Heart right ventricle (tissue), 16 donors: ENCODE measurements at regions of chr9 and their contacts with region 1.

Region 1: DNA sequence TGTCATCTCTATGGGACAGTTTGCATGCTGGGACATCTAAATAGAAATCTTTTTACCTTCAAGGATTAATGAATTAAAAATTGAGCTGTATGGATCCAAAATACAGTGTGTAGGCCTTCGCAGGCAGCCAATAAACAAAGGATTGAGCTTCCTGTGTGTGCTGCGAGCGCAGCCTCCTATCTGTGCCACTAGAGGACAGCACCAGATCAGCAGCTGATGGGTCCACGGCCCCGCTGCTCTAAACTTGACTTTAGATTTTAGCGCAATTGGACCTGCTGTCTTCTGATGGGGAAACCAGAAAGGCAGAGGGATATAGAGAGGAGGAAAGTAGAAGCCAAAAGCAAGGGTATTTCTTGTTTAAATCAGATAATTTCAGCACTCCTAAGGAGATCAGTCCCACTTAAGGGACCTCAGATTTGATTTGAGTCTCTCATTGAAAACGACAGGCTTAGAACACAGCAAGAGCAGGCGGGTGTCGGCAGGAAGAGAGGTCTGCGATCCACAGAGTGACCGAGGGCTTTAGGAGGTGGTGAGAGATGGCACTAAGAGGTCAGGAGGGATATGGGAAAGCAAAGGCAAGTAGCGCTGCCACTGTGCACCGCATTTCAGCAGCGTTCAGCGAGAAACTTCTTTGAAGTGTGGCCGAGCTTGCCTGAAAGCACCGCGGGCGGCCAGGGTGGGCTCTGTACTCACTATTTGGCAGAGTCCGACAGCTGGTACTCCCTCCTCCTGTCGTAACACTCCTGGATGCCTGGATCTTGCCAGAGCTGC is 214.3 kb downstream of the GNA14 start:
- DNase-seq: peak; percentile 46 to 53
- ATAC-seq: peak; percentile 65 to 89 (median 83)
- H3K4me3 ChIP-seq: no peak overlapping the region
- H3K27ac ChIP-seq: no peak overlapping the region
- H3K4me1 ChIP-seq: peaks cover 0 to 7% (median 0%) of the 10 kb centered on the region in 9 donors
- H3K27me3 ChIP-seq: peaks cover 0 to 4% (median 0%) of the 10 kb centered on the region in 7 donors
- CTCF ChIP-seq: peak; percentile 88 to 96 (median 93)

Region 2: GRCh38 chr9:77495834-77496671 is 62.2 kb after region 1 on chr9:
- intact Hi-C with region 1: no loop called
- DNase-seq: no peak
- ATAC-seq: peak in 7 of 8 donors; percentile 64 to 86 (median 78)
- H3K4me3 ChIP-seq: no peak overlapping the region
- H3K27ac ChIP-seq: peak overlapping the region in 6 of 10 donors; percentile 6 to 65 (median 34)
- H3K4me1 ChIP-seq: peaks cover 0 to 36% (median 6%) of the 10 kb centered on the region in 9 donors
- H3K27me3 ChIP-seq: no peaks in the 10 kb centered on the region
- CTCF ChIP-seq: no peak

Region 3: DNA sequence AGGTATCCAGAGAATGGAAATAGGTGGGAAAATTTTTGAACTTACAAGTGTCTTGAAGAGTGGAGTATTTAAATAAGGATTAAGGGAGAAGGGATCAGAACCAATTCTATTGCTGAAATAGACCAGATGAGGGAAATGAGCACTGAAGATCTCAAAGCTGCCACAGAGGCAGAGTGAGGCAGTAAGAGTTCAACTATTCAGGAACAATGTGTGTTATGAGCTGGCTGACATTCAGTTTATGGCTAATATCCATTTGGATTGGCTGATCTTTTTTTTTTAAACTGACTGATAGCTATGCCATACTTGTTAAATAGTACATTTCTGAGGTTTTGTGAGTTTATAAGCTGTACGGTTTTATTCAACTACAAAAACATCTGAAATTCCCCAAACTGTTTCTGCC is 309.5 kb after region 1 on chr9:
- intact Hi-C with region 1: loop called in 4 of 10 experiments (anchors 10 kb)
- DNase-seq: no peak
- ATAC-seq: no peak
- H3K4me3 ChIP-seq: no peak overlapping the region
- H3K27ac ChIP-seq: no peak overlapping the region
- H3K4me1 ChIP-seq: peaks cover 0 to 15% (median 3%) of the 10 kb centered on the region in 9 donors
- H3K27me3 ChIP-seq: no peaks in the 10 kb centered on the region
- CTCF ChIP-seq: no peak

Region 4: GRCh38 chr9:77751341-77752091 is 317.7 kb after region 1 on chr9:
- intact Hi-C with region 1: loop called in 5 of 10 experiments (anchors 5 to 10 kb)
- DNase-seq: peak in 1 of 2 donors; percentile 61
- ATAC-seq: peak in 7 of 8 donors; percentile 63 to 93 (median 77)
- H3K4me3 ChIP-seq: no peak overlapping the region
- H3K27ac ChIP-seq: peak overlapping the region in 4 of 10 donors; percentile 5 to 37 (median 12)
- H3K4me1 ChIP-seq: peaks cover 0 to 22% (median 10%) of the 10 kb centered on the region in 9 donors
- H3K27me3 ChIP-seq: no peaks in the 10 kb centered on the region
- CTCF ChIP-seq: peak; percentile 24 to 72 (median 53)

Region 5: GRCh38 chr9:78121488-78121887 is 687.6 kb after region 1 on chr9:
- intact Hi-C with region 1: loop called in 1 of 10 experiments (anchors 5 kb)
- DNase-seq: peak; percentile 44 to 57
- ATAC-seq: no peak
- H3K4me3 ChIP-seq: no peak overlapping the region
- H3K27ac ChIP-seq: no peak overlapping the region
- H3K4me1 ChIP-seq: peaks cover 0 to 26% (median 0%) of the 10 kb centered on the region in 9 donors
- H3K27me3 ChIP-seq: peaks cover 0 to 11% (median 0%) of the 10 kb centered on the region in 7 donors
- CTCF ChIP-seq: peak in 8 of 9 donors; percentile 8 to 75 (median 60)